ENCODE measurements at regions of chr16 and their contacts with region 1.

Region 1: DNA sequence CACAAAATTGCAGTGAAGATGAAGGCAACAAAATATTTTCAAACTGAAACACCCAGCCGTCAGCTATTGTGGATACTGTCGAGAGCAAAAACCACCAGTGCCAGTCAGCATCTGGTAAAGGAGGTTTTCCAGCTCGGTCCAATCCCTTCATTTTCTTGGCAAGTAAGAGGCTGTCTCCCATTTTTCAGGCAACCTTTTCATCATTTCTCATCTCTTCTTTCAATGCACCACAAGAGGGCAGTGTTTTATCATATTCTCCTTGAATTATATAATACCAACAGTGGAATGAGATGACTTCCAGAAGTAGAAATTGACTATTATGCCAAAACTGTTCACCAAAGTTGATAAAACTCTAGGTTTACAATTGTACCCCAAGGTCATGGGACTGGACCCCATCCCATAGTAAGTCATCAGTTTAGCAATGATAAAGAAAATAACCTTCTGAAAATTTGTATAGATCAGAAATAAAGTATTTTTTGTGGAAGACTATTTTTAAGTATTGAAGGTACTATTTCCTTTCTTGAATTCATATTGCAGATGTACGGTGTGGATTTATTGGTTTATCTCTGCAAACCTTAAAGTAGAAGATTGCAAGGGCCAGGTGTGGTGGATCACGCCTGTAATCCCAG is 16.8 kb downstream of the NQO1 start:
- DNase-seq: peak; percentile 74
- H3K4me3 Mint-ChIP-seq: no peak overlapping the region
- H3K27ac Mint-ChIP-seq: no peak overlapping the region
- H3K4me1 Mint-ChIP-seq: peaks cover 9% of the 10 kb centered on the region
- H3K27me3 Mint-ChIP-seq: no peaks in the 10 kb centered on the region

Region 2: GRCh38 chr16:69542974-69543373 is 166.6 kb before region 1 on chr16:
- intact Hi-C with region 1: no loop called
- DNase-seq: no peak
- H3K4me3 Mint-ChIP-seq: no peak overlapping the region
- H3K27ac Mint-ChIP-seq: no peak overlapping the region
- H3K4me1 Mint-ChIP-seq: no peaks in the 10 kb centered on the region
- H3K27me3 Mint-ChIP-seq: peaks cover 1% of the 10 kb centered on the region

Region 3: GRCh38 chr16:69726296-69727060 is 16.9 kb after region 1 on chr16 and contains the start of gene NQO1:
- intact Hi-C with region 1: loop called (anchors 1 kb)
- DNase-seq: peak; percentile 98
- H3K4me3 Mint-ChIP-seq: peak within 1 kb of the TSS; percentile 93
- H3K27ac Mint-ChIP-seq: peak within 1 kb of the TSS; percentile 98
- H3K4me1 Mint-ChIP-seq: peaks cover 38% of the 10 kb centered on the region
- H3K27me3 Mint-ChIP-seq: no peaks in the 10 kb centered on the region
- total RNA-seq, gene NQO1: 9.2 and 9.8 TPM in 2 replicates

Measured in activated CD4-positive, alpha-beta T cell treated with anti-CD3 and anti-CD28 coated beads, Interleukin-2, amount 10 ng/mL, durations not matched to agents 24 days and 14 days (primary cell).